ENCODE measurements at regions of chr11 and their contacts with region 1.

Region 1: GRCh38 chr11:44775366-44775984 is 48.7 kb downstream of the TSPAN18 start:
- DNase-seq: no peak
- ATAC-seq: peak; percentile 94
- H3K4me3 ChIP-seq: no peak overlapping the region
- H3K27ac ChIP-seq: no peak overlapping the region
- H3K4me1 ChIP-seq: no peaks in the 10 kb centered on the region
- H3K27me3 ChIP-seq: peaks cover 0 to 1% of the 10 kb centered on the region in 2 experiments; a peak in 1 of 4 replicates
- CTCF ChIP-seq: peak; percentile 70 to 84 (median 77)
- EP300 ChIP-seq: no peak
- POLR2A ChIP-seq: no peak
- RAD21 ChIP-seq: peak; percentile 52

Region 2: DNA sequence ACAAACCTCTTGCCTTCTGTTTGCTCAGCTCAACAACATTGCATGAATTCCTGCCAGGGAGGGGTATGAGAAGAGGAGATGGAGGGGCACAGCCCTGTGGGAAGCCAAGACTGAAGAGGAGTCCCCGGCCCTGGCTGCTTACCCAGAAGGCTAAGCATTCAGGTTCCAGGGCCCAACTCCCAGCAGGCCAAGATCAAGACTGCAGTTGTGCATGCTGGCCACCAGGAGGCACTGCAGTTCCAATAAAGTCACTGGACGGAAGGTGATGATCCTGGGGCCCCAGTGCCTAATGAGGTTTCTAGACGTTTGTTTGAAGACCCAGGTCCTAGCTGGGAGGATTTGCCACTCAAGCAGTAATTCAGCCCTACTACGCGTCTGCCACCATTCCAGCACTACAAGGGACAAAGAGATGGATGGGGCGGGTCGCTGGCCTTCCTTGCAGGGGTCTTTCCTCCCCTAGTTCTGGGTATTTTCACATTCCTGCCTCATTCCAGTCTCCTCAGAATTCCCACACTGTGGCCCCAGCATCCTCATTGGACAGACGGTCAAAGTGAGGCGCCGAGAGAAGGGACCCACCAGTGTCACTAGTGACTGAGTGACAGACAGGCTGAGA is 489.1 kb before region 1 on chr11:
- CTCF ChIA-PET with region 1: no interaction called
- POLR2A ChIA-PET with region 1: no interaction called
- RAD21 ChIA-PET with region 1: no interaction called
- SMC1A ChIA-PET with region 1: no interaction called
- in situ Hi-C with region 1: no loop called
- intact Hi-C with region 1: loop called (anchors 5 kb)
- DNase-seq: peak; percentile 2
- ATAC-seq: peak; percentile 91
- H3K4me3 ChIP-seq: no peak overlapping the region
- H3K27ac ChIP-seq: no peak overlapping the region
- H3K4me1 ChIP-seq: no peaks in the 10 kb centered on the region
- H3K27me3 ChIP-seq: no peaks in the 10 kb centered on the region; a peak in 1 of 4 replicates
- CTCF ChIP-seq: peak; percentile 83 to 99 (median 96); a peak in 5 of 6 replicates
- EP300 ChIP-seq: no peak
- POLR2A ChIP-seq: no peak
- RAD21 ChIP-seq: peak; percentile 96

Region 3: DNA sequence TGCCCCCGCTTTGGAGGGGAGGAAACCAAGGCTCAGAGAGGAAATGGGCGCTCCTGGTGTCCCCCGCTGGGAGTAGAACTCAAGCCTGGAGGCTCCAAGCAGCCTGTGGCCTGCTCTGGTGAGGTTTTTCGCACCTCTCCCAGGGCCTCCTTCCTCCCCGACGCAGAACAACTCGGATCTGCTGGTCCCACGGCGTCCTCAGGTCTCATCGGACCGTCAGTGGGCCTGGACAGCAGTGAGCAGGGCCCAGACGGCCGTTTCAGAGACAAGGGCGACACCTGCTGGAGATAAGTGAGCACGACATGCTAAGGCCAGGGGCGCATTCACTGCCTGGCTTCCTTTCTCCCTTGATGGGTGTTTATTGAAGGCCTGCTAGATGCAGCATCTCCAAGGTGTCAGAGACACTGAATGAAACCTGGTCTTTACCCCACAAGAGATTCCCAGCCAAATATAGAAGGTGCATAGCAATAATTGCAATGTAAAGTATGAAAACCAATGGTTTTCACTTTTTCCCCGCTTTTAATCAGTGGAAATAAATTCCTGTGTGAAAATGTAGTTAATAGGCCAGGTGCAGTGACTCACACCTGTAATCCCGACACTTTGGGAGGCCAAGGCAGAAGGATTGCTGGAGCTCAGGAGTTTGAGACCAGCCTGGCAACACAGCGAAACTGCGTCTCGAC is 237.0 kb before region 1 on chr11:
- CTCF ChIA-PET with region 1: interaction called, 3 read pairs
- POLR2A ChIA-PET with region 1: no interaction called
- RAD21 ChIA-PET with region 1: no interaction called
- SMC1A ChIA-PET with region 1: no interaction called
- in situ Hi-C with region 1: no loop called
- intact Hi-C with region 1: loop called (anchors 5 kb)
- DNase-seq: no peak
- ATAC-seq: peak; percentile 99
- H3K4me3 ChIP-seq: no peak overlapping the region
- H3K27ac ChIP-seq: no peak overlapping the region
- H3K4me1 ChIP-seq: no peaks in the 10 kb centered on the region
- H3K27me3 ChIP-seq: peaks cover 0 to 1% of the 10 kb centered on the region in 2 experiments; a peak in 3 of 4 replicates
- CTCF ChIP-seq: peak; percentile 94 to 96 (median 96); a peak in 5 of 6 replicates
- EP300 ChIP-seq: no peak
- POLR2A ChIP-seq: no peak
- RAD21 ChIP-seq: peak; percentile 90

Region 4: DNA sequence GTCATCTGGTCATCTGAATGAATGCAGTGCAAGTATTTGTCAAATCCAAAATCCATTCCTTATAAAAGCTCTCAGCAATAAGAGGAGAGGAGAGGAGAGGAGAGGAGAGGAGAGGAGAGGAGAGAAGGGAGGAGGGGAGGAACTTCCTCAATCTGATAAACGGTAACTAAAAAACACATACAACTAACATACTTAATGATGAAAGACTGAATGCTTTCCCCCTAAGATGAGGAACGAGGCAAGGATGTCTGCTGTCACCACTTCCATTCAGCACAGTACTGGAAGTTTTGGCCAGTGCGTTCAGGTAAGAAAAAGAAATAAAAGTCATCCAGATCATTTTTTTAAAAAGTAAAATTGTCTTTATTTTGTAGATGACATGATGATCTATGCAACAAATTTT is 129.6 kb before region 1 on chr11:
- CTCF ChIA-PET with region 1: no interaction called
- POLR2A ChIA-PET with region 1: no interaction called
- RAD21 ChIA-PET with region 1: no interaction called
- SMC1A ChIA-PET with region 1: no interaction called
- in situ Hi-C with region 1: no loop called
- intact Hi-C with region 1: no loop called
- DNase-seq: no peak
- ATAC-seq: no peak
- H3K4me3 ChIP-seq: no peak overlapping the region
- H3K27ac ChIP-seq: no peak overlapping the region
- H3K4me1 ChIP-seq: no peaks in the 10 kb centered on the region
- H3K27me3 ChIP-seq: no peaks in the 10 kb centered on the region
- CTCF ChIP-seq: no peak
- EP300 ChIP-seq: no peak
- POLR2A ChIP-seq: no peak
- RAD21 ChIP-seq: no peak

Region 5: DNA sequence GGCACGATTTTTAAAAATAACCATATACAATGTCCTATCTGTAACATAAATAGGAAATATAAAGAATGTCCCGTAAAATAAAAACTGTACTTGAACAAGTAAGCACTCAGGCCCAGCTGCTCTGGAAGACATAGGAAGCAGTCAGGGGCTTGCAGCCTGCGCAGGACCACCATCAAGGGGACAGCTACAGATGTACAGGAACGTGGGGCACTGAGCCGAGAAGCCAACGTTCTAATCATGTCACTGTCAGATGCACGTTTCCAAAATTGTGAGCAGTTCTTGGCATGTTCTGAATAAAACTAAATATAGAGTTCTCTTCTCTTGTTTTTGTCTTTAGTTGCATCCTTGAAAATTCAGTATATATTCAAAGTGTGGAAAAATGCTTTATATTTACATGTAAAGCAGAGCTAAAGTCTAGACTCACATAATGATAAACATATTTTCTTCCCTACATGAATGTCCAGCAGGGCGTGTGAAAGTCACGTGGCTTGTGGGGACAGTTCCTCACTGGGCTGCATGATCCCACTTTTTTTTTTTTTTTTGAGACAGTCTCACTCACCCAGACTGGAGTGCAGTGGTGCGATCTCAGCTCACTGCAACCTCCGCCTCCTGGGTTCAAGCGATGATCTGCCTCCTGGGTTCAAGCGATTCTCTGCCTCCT is 77.1 kb before region 1 on chr11:
- CTCF ChIA-PET with region 1: no interaction called
- POLR2A ChIA-PET with region 1: no interaction called
- RAD21 ChIA-PET with region 1: no interaction called
- SMC1A ChIA-PET with region 1: no interaction called
- in situ Hi-C with region 1: no loop called
- intact Hi-C with region 1: no loop called
- DNase-seq: no peak
- ATAC-seq: no peak
- H3K4me3 ChIP-seq: no peak overlapping the region
- H3K27ac ChIP-seq: no peak overlapping the region
- H3K4me1 ChIP-seq: peaks cover 3% of the 10 kb centered on the region; the same call in 1 of the 2 replicates
- H3K27me3 ChIP-seq: no peaks in the 10 kb centered on the region
- CTCF ChIP-seq: no peak
- EP300 ChIP-seq: no peak
- POLR2A ChIP-seq: no peak
- RAD21 ChIP-seq: no peak

Region 6: GRCh38 chr11:44785856-44786606 is 10.6 kb after region 1 on chr11:
- CTCF ChIA-PET with region 1: interaction called, 10 read pairs
- POLR2A ChIA-PET with region 1: no interaction called
- RAD21 ChIA-PET with region 1: no interaction called
- SMC1A ChIA-PET with region 1: interaction called, 3 read pairs
- in situ Hi-C with region 1: no loop called
- intact Hi-C with region 1: no loop called
- DNase-seq: no peak
- ATAC-seq: peak; percentile 73
- H3K4me3 ChIP-seq: no peak overlapping the region
- H3K27ac ChIP-seq: no peak overlapping the region
- H3K4me1 ChIP-seq: no peaks in the 10 kb centered on the region
- H3K27me3 ChIP-seq: no peaks in the 10 kb centered on the region; a peak in 1 of 4 replicates
- CTCF ChIP-seq: peak; percentile 2 to 43 (median 13); a peak in 1 of 6 replicates
- EP300 ChIP-seq: no peak
- POLR2A ChIP-seq: no peak
- RAD21 ChIP-seq: no peak

Region 7: DNA sequence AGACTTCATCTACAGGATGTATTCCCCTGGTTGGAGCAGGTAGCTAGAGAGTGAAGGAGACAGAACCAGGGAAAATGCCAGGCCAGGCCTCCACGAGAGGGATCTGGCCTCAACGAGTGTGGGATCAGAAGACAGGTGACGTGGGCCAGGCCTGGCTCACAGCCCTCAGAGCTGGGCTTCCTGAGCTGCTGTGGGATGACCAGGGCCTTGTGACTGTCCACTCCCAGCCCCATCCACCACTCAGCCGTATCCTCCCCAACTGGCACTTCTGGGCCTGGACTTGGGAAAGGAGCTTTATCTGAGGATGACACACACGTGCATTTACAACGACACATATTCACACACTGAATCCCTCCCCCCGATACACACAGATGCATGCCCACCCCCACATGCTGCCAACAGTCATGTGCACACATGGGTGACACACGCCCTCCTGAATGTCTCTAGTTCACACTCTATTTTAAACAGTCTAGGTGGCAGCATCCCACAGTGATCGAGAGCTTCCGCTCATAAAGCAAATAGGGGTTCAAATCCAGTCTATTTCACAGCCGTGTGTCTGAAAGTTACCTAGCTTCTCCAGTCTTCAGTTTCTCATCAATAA is 82.1 kb after region 1 on chr11:
- CTCF ChIA-PET with region 1: no interaction called
- POLR2A ChIA-PET with region 1: no interaction called
- RAD21 ChIA-PET with region 1: no interaction called
- SMC1A ChIA-PET with region 1: no interaction called
- in situ Hi-C with region 1: no loop called
- intact Hi-C with region 1: no loop called
- DNase-seq: no peak
- ATAC-seq: no peak
- H3K4me3 ChIP-seq: no peak overlapping the region
- H3K27ac ChIP-seq: no peak overlapping the region
- H3K4me1 ChIP-seq: peaks cover 12% of the 10 kb centered on the region
- H3K27me3 ChIP-seq: no peaks in the 10 kb centered on the region; a peak in 2 of 4 replicates
- CTCF ChIP-seq: no peak
- EP300 ChIP-seq: no peak
- POLR2A ChIP-seq: no peak
- RAD21 ChIP-seq: no peak

Region 8: GRCh38 chr11:44893846-44894617 is 118.6 kb after region 1 on chr11:
- CTCF ChIA-PET with region 1: interaction called, 4 read pairs
- POLR2A ChIA-PET with region 1: no interaction called
- RAD21 ChIA-PET with region 1: interaction called, 6 read pairs
- SMC1A ChIA-PET with region 1: interaction called, 3 read pairs
- in situ Hi-C with region 1: no loop called
- intact Hi-C with region 1: loop called (anchors 5 kb)
- DNase-seq: no peak
- ATAC-seq: peak; percentile 98
- H3K4me3 ChIP-seq: no peak overlapping the region
- H3K27ac ChIP-seq: no peak overlapping the region
- H3K4me1 ChIP-seq: no peaks in the 10 kb centered on the region
- H3K27me3 ChIP-seq: no peaks in the 10 kb centered on the region; a peak in 2 of 4 replicates
- CTCF ChIP-seq: peak; percentile 81 to 86 (median 83)
- EP300 ChIP-seq: no peak
- POLR2A ChIP-seq: no peak
- RAD21 ChIP-seq: peak; percentile 81